AG04450 (cell line): ENCODE measurements at regions of chr5 and their contacts with region 1.

Region 1: GRCh38 chr5:57779383-57780223 is 297.0 kb upstream of the ACTBL2 start:
- DNase-seq: peak; percentile 57
- H3K4me3 ChIP-seq: no peak overlapping the region
- H3K27ac ChIP-seq: no peak overlapping the region
- H3K27me3 ChIP-seq: no peaks in the 10 kb centered on the region
- CTCF ChIP-seq: peak; percentile 71

Region 2: DNA sequence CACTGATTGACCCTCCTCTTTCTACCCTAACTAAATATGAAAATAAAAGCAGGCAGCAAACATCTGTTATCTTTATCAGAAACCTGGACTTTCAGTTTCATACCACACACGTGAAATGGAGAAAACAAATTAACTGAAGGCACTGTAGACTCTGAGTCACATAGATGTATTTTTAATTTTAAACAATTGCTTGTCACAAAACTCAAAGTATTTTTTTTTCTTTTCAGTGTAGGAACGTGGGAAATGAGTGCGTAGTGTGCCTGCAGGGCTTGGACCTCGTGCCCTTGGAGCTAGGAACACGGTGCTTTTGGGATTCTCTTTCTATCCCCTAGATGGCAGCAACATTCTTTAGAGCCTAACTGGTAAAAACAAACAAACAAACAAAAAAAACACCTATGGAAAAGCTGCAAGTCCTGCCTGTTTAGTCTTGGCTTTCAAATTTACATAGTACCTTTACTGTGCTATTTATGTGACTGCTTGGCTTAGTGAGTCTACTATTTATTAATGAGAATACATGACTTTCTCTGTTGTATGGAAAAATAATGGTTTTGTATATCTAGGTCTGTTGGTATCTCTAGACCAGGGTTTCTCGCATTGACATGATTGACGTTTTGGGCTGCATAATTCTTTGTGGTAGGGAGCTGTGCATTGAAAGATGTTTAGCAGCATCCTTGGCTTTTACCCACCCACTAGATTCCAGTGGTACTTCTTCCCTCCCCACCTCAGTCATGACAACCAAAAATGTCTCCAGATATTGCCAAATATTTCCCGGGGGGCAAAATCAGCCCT is 280.1 kb before region 1 on chr5:
- CTCF ChIA-PET with region 1: interaction called, 83 read pairs
- POLR2A ChIA-PET with region 1: no interaction called
- DNase-seq: no peak
- H3K4me3 ChIP-seq: no peak overlapping the region
- H3K27ac ChIP-seq: no peak overlapping the region
- H3K27me3 ChIP-seq: no peaks in the 10 kb centered on the region
- CTCF ChIP-seq: peak; percentile 77

Region 3: DNA sequence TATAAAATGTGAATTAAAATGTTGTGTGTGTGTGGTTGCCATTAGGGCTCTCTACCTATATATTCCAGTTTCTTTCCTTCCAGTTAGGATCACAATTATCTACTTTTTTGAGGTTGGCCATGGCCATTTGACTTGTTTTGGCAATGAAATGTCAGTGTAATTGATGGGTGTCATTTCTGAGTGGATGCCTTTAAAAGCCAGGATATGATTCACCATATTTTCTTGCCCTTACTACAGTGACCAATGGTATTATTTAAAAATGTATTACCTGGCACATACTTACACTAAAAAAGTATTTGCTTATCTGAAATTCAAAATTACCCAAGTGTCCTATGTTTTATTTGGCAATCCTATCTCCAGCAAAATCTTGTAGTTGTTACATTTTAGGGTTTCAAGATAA is 38.3 kb before region 1 on chr5:
- CTCF ChIA-PET with region 1: interaction called, 12 read pairs
- POLR2A ChIA-PET with region 1: no interaction called
- DNase-seq: no peak
- H3K4me3 ChIP-seq: no peak overlapping the region
- H3K27ac ChIP-seq: no peak overlapping the region
- H3K27me3 ChIP-seq: no peaks in the 10 kb centered on the region
- CTCF ChIP-seq: no peak

Region 4: DNA sequence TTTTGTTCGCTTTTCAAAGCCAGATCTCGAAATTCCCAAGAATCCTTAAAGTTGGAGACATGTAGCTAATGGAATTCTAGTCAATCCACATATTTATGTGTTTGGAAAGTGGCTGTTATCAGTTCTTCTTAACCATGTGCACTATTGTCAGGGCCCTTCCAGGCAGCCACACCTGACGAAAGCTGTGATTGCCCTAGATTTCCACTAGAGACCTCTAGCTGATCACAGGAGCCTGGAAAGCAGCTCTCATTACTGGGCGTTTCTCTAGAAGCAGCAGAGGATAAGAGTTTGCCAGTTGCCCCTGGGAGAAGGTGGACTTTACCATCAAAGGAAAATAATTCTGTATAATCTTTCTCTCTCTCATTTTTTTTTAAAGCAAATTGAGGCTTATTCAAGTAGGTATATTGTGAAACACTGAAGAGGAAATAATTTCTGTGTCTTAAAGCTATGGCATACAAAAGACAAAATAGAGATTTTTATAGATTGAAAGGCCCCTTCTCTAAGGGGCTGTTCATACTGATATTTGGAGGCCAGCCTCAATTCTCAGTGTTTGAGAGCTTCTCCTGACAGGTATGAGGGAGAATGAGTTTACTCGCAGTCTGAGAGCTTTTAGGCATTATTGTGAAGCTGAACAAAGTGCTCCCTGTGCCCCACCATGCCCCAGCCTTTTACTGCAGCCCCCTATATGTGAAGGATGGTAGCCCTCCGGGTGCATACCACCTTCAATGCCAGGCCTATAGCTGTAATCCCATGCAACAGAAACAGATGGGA is 108.4 kb after region 1 on chr5:
- CTCF ChIA-PET with region 1: interaction called, 13 read pairs
- POLR2A ChIA-PET with region 1: no interaction called
- DNase-seq: peak; percentile 24
- H3K4me3 ChIP-seq: no peak overlapping the region
- H3K27ac ChIP-seq: no peak overlapping the region
- H3K27me3 ChIP-seq: no peaks in the 10 kb centered on the region
- CTCF ChIP-seq: peak; percentile 81

Region 5: DNA sequence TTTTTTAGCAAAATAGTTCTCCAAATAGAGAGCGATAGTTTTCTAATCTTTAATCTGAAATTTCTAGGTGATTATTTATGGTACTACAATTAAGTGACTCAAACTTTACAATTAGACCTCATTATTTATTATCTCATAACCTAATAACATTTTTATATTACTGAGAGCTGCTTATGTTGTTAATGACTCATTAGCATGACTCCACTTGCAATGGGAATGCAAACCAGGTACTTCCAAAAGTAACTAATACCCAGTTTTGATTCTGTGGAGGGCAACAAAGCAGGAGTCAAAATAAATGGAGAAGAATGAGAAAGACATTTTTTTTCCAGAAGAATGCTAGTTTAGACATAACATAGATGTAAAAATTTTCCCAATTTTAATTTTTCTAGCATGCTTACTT is 214.3 kb after region 1 on chr5:
- CTCF ChIA-PET with region 1: no interaction called
- POLR2A ChIA-PET with region 1: no interaction called
- DNase-seq: no peak
- H3K4me3 ChIP-seq: no peak overlapping the region
- H3K27ac ChIP-seq: no peak overlapping the region
- H3K27me3 ChIP-seq: no peaks in the 10 kb centered on the region
- CTCF ChIP-seq: no peak

Region 6: DNA sequence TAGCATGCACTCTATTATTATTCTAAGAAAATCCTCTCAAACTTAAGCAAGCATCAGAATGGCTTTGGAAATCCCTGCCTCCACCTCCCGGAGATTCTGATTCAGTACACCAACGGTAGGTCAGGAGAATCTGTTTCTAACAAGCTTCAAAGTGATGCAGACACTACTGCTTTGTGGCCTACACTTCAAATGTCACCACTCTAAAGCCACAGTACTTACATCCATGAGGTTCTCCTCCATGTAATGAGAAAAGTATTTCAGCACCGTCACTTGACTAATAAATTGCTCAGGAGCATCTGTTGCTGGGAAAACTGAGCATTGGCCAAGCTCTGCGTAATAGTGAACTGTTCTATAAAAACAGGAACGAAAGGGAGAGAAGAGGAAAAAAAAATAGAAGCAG is 675.5 kb after region 1 on chr5:
- CTCF ChIA-PET with region 1: interaction called, 177 read pairs
- POLR2A ChIA-PET with region 1: interaction called, 36 read pairs
- DNase-seq: no peak
- H3K4me3 ChIP-seq: peak overlapping the region; percentile 94
- H3K27ac ChIP-seq: no peak overlapping the region
- H3K27me3 ChIP-seq: no peaks in the 10 kb centered on the region
- CTCF ChIP-seq: no peak